Activated B cell treated with CpG ODN at 0.5 μM for 24 hours (primary cell): ENCODE measurements at regions of chr1 and their contacts with region 1.

Region 1: GRCh38 chr1:50873458-50874187 is 86.4 kb downstream of the FAF1 start:
- DNase-seq: peak; percentile 46
- ATAC-seq: peak; percentile 89
- H3K4me3 Mint-ChIP-seq: peak overlapping the region; percentile 73
- H3K27ac Mint-ChIP-seq: peak overlapping the region; percentile 32
- H3K4me1 Mint-ChIP-seq: peaks cover 16% of the 10 kb centered on the region
- H3K27me3 Mint-ChIP-seq: no peaks in the 10 kb centered on the region
- CTCF ChIP-seq: peak; percentile 87

Region 2: DNA sequence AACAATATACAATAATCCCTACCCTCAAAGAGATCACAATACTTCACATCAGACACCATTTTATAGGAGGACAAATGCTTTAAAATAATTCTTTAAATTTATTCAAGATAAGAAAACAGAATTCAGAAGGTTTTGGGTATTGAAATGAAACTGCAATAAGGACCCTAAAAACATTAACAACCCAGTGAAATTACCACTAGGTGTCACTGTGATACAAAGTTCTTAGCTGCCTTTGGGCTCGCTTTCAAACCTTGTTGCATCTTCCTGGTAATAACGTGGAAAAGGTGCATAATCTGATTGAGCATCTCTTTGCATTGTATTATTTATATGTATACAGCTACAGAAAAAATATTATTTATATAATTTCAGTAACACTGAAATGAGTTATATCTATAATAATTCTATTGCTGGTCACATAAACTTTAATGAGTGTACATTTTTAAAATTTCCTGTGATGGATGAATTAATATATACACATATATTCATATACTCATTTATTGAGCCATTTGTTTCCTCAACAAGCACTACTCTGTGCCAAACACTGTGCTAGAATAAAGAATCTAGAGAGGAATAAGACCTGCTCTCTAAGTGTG is 98.8 kb before region 1 on chr1:
- CTCF ChIA-PET with region 1: interaction called, 30 read pairs
- POLR2A ChIA-PET with region 1: no interaction called
- intact Hi-C with region 1: loop called (anchors 1 kb)
- DNase-seq: no peak
- ATAC-seq: no peak
- H3K4me3 Mint-ChIP-seq: no peak overlapping the region
- H3K27ac Mint-ChIP-seq: no peak overlapping the region
- H3K4me1 Mint-ChIP-seq: peaks cover 5% of the 10 kb centered on the region
- H3K27me3 Mint-ChIP-seq: no peaks in the 10 kb centered on the region
- CTCF ChIP-seq: peak; percentile 86

Region 3: GRCh38 chr1:50968158-50968820 is 94.7 kb after region 1 on chr1:
- CTCF ChIA-PET with region 1: interaction called, 3 read pairs
- POLR2A ChIA-PET with region 1: no interaction called
- intact Hi-C with region 1: loop called (anchors 1 kb)
- DNase-seq: peak; percentile 80
- ATAC-seq: peak; percentile 80
- H3K4me3 Mint-ChIP-seq: peak overlapping the region; percentile 98
- H3K27ac Mint-ChIP-seq: peak overlapping the region; percentile 87
- H3K4me1 Mint-ChIP-seq: peaks cover 18% of the 10 kb centered on the region
- H3K27me3 Mint-ChIP-seq: no peaks in the 10 kb centered on the region
- CTCF ChIP-seq: no peak

Region 4: GRCh38 chr1:51139474-51139873 is 265.9 kb after region 1 on chr1:
- CTCF ChIA-PET with region 1: interaction called, 3 read pairs
- POLR2A ChIA-PET with region 1: no interaction called
- intact Hi-C with region 1: loop called (anchors 2 kb)
- DNase-seq: no peak
- ATAC-seq: no peak
- H3K4me3 Mint-ChIP-seq: no peak overlapping the region
- H3K27ac Mint-ChIP-seq: no peak overlapping the region
- H3K4me1 Mint-ChIP-seq: no peaks in the 10 kb centered on the region
- H3K27me3 Mint-ChIP-seq: peaks cover 11% of the 10 kb centered on the region
- CTCF ChIP-seq: no peak

Region 5: DNA sequence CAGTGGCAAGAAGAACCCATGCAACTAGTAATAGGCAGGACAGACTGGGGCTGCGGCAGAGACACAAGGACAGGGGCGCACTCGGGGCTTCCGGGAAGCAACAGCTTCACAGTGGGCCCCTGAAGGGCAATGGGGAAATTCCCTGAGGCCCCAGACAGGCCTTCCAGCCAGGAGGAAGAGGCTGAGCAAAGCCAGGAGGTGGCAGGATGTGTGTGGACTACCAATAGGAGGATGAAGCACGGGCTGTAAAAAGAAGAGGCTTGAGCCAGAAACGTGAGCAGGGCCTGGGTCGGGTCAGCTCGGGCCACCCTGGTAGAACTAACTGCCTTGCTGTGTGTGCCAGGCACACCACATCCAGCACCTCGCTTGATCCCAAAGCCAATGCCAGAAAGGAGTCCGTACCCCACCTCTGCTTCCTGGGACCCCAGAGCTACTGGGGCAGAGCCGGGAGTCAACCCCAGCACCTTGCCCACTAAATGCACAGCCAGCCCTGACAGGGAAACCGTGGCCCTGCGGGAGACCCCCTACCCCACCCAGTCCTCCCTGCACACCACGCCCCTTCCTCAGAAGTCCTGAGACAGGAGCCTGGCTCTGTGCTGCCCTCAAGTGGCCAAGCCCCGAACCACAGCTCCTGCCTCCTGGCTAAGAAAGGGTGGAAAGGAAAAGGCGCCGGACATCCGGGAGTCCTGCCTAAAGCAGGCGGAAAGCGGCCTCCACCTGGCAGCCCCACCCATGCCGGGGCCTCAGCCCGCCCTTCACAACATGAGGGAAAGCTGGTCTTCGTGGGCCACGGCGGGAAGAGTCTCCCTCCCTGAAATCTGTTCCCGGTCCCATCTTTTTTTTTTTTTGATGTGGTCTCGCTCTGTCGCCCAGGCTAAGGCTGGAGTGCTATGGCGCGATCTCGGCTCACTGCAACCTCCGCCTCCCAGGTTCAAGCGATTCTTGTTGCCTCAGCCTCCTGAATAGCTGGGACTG is 423.0 kb after region 1 on chr1:
- CTCF ChIA-PET with region 1: interaction called, 4 read pairs
- POLR2A ChIA-PET with region 1: no interaction called
- intact Hi-C with region 1: loop called (anchors 5 kb)
- DNase-seq: peak; percentile 71
- ATAC-seq: peak; percentile 65
- H3K4me3 Mint-ChIP-seq: peak overlapping the region; percentile 68
- H3K27ac Mint-ChIP-seq: no peak overlapping the region
- H3K4me1 Mint-ChIP-seq: peaks cover 8% of the 10 kb centered on the region
- H3K27me3 Mint-ChIP-seq: peaks cover 2% of the 10 kb centered on the region
- CTCF ChIP-seq: peak; percentile 74